Upper lobe of right lung (tissue), 1 donor: ENCODE measurements at regions of chr10 and their contacts with region 1.

Region 1: GRCh38 chr10:97463363-97464132 is 17.6 kb downstream of the ZDHHC16 start:
- DNase-seq: no peak
- ATAC-seq: peak; percentile 90
- H3K4me3 ChIP-seq: no peak overlapping the region
- H3K27ac ChIP-seq: peak overlapping the region; percentile 38
- H3K4me1 ChIP-seq: peaks cover 6% of the 10 kb centered on the region
- H3K27me3 ChIP-seq: no peaks in the 10 kb centered on the region
- CTCF ChIP-seq: peak; percentile 80

Region 2: GRCh38 chr10:97048649-97049427 is 414.7 kb before region 1 on chr10:
- intact Hi-C with region 1: no loop called
- DNase-seq: no peak
- ATAC-seq: peak; percentile 25
- H3K4me3 ChIP-seq: no peak overlapping the region
- H3K27ac ChIP-seq: no peak overlapping the region
- H3K4me1 ChIP-seq: no peaks in the 10 kb centered on the region
- H3K27me3 ChIP-seq: no peaks in the 10 kb centered on the region
- CTCF ChIP-seq: no peak

Region 3: GRCh38 chr10:97378933-97379921 is 84.3 kb before region 1 on chr10:
- intact Hi-C with region 1: no loop called
- DNase-seq: no peak
- ATAC-seq: peak; percentile 28
- H3K4me3 ChIP-seq: no peak overlapping the region
- H3K27ac ChIP-seq: no peak overlapping the region
- H3K4me1 ChIP-seq: no peaks in the 10 kb centered on the region
- H3K27me3 ChIP-seq: no peaks in the 10 kb centered on the region
- CTCF ChIP-seq: no peak

Region 4: DNA sequence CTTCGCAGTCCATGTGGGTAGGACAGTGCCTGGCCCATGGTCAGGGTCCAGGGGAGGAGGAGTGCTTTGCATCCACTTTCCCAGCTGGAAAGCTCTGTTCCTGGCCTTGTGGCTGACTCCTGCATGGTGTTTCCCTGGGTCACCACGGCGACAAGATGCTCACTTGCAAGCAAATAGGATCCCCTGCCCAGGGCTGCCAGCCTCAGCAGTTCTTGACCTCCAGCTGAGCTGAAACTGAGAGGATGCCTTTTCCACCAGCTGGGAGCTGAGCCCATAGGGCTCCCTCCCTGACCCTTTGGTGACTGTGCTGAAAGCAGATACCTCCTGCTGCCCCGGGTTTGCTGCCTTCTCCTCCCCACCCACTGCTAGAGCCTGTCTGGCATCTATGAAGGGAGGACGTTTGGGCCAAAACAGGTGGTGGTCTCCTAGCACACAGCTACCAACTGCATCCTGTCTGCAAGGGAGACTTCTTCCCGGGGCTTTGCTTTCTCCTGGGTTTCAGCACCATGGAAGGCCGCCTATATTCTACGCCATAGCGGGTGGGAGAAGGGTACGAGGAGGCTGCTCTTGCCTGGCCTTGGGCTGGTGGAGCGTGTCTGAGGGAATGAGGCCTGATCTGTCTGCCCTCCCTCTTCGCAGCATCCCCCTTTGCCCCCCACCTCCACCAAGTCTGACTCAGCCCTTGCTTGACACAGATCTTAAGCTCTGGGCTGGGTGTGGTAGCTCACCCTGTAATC is 69.6 kb after region 1 on chr10:
- intact Hi-C with region 1: no loop called
- DNase-seq: no peak
- ATAC-seq: no peak
- H3K4me3 ChIP-seq: no peak overlapping the region
- H3K27ac ChIP-seq: no peak overlapping the region
- H3K4me1 ChIP-seq: no peaks in the 10 kb centered on the region
- H3K27me3 ChIP-seq: no peaks in the 10 kb centered on the region
- CTCF ChIP-seq: no peak

Region 5: DNA sequence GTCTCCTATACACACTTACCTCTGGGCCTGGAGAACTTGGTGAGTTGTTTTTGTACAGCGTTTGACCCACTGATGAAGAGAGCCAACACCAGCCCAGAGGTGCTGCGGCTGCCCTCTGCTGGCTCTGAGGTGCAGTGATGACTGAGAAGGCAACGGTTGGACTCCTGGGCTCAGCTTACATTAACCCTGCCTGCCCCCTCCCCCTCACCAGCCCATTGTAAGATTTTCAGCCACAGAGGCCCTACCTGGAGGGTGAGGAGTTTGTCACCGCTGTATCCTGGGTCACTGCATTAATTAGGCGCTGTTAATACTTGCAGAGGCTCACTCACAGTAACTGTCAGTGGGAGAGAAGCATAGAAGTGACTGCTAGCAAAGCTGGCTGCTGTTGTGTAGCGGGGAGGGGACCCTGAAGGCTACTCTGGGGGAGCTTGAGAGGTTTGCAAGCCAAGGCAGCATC is 90.1 kb after region 1 on chr10:
- intact Hi-C with region 1: loop called (anchors 5 kb)
- DNase-seq: peak; percentile 85
- ATAC-seq: peak; percentile 97
- H3K4me3 ChIP-seq: no peak overlapping the region
- H3K27ac ChIP-seq: no peak overlapping the region
- H3K4me1 ChIP-seq: peaks cover 11% of the 10 kb centered on the region
- H3K27me3 ChIP-seq: no peaks in the 10 kb centered on the region
- CTCF ChIP-seq: peak; percentile 86